Vagina (tissue), 2 donors: ENCODE measurements at regions of chr7 and their contacts with region 1.

Region 1: DNA sequence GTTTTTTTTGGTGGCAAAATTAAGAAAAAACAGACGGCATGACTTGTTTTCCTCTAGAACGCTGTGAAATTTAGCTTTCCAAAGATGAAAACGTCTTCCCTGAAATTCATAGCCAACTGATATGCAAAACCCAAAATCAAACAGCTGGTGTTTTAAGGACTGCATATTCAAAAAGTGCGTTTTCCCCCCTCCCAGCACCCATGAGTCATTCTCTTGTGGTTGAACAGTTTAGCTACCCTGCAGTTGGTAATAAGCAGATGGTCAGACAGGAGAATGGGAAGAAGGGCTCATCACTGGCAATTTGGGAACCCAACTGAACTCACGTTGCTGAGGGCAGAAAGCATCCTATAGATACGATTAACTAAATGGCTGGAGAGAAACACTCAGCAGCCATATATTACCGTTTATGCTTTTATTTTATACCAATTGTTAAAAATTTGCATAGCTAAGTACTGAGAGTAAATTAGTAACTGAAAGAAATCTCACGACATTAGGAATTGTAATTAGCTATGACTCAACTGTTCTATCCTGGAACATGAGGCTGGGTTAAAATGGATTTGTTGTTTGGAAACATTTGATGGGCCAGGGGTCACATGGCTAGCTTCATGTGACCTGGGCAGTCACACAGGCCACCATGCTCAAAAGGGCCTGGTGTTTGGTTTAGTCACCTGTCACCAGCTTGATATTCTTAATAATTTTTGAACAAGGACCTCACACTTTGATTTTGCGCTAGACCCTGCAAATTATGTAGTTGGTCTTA is 343.1 kb downstream of the PHTF2 start:
- DNase-seq: no peak
- H3K4me3 ChIP-seq: no peak overlapping the region
- H3K27ac ChIP-seq: no peak overlapping the region
- H3K4me1 ChIP-seq: peaks cover 20% of the 10 kb centered on the region
- H3K27me3 ChIP-seq: no peaks in the 10 kb centered on the region
- CTCF ChIP-seq: no peak
- POLR2A ChIP-seq: no peak

Region 2: DNA sequence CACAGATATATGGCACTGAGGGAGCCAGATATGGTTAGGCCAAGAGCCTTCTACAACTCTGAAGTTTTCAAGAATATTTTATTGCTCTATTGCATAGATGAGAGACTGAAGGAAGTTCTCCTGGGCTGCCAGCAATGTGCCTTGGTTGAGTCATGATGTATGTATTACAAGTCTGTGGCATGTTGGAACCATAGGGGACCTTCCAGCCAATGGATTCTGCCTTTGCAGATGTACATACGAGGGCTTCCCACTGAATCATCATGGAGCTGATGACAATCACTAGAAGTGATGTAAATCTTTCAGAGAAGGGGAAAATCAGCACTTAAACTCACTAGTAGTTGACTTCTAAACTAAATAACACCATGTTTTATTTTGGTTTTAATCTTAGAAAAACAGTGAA is 76.3 kb after region 1 on chr7:
- intact Hi-C with region 1: loop called (anchors 10 kb)
- DNase-seq: no peak
- H3K4me3 ChIP-seq: no peak overlapping the region
- H3K27ac ChIP-seq: no peak overlapping the region
- H3K4me1 ChIP-seq: no peaks in the 10 kb centered on the region
- H3K27me3 ChIP-seq: no peaks in the 10 kb centered on the region
- CTCF ChIP-seq: no peak
- POLR2A ChIP-seq: no peak